Activated CD4-positive, alpha-beta T cell treated with anti-CD3 and anti-CD28 coated beads for 36 hours (primary cell): ENCODE measurements at regions of chr2 and their contacts with region 1.

Region 1: DNA sequence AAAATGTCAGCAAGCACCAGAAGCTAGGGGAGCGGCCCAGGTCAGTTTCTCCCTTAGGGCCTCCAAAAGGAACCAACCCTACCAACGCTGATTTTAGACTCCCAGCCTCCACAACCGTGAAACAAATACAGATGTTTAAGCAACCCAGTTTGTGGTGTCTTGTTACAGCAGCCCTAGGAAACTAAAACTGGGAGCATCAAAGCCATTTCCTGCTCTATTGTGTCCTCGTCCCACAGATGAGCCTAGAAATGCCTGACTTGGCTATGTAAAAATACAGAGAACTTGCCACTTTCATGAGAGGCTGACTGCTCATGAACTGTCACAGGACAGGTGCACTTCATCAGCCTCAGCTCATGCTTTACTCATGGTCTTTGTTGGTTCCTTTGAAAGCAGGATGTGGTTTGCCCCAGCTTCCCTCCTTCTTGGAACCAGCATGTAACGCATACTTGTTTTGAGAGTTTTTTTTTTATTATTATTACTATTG is 97.6 kb upstream of the SLC39A10 start:
- DNase-seq: peak; percentile 88
- ATAC-seq: peak; percentile 72
- H3K4me3 Mint-ChIP-seq: peak overlapping the region; percentile 33
- H3K27ac Mint-ChIP-seq: peak overlapping the region; percentile 97
- H3K4me1 Mint-ChIP-seq: peaks cover 67% of the 10 kb centered on the region
- H3K27me3 Mint-ChIP-seq: no peaks in the 10 kb centered on the region

Region 2: GRCh38 chr2:195486987-195487644 is 72.4 kb before region 1 on chr2:
- CTCF ChIA-PET with region 1: no interaction called
- POLR2A ChIA-PET with region 1: interaction called, 4 read pairs
- intact Hi-C with region 1: loop called (anchors 2 kb)
- DNase-seq: peak; percentile 11
- ATAC-seq: peak; percentile 82
- H3K4me3 Mint-ChIP-seq: no peak overlapping the region
- H3K27ac Mint-ChIP-seq: no peak overlapping the region
- H3K4me1 Mint-ChIP-seq: peaks cover 20% of the 10 kb centered on the region
- H3K27me3 Mint-ChIP-seq: no peaks in the 10 kb centered on the region

Region 3: DNA sequence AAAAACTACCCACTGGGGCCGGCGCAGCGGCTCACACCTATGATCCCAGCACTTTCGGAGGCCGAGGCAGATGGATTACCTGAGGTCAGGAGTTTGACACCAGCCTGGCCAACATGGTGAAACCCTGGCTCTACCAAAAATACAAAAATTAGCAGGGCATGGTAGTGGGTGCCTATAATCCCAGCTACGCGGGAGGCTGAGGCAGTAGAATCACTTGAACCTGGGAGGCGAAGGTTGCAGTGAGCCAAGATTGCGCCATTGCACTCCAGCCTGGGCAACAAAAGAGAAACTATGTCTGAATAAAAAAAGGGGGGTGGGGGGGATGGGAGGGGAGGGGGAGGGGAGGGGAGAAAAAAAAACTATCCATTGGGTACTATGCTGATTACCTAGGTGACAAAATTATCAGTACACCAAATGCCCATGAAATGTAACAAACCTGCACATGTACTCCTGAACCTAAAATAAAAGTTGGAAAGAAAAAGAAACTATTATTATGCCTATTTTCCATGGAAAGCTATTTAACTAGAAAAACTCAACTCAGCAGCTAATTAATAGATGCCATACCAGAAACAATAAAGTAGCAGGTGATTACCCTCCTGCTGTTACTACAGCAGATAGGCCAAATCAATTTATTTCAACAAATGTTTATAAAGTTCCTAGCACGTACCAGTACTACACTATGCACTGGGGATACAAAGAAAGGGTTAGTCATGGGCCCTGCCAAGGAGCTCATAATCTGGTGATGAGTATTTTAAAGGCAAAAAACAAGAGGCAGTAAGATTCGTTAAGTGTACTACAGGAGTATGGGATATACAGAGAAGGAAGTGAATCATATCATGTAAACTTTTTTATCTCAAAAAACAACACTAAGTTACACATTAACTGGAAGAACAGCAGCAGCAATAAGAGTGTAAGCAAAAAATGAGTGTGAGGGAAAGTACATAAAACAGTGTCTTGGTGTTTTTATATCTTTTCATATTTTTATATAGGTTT is 15.3 kb before region 1 on chr2:
- CTCF ChIA-PET with region 1: interaction called, 15 read pairs
- POLR2A ChIA-PET with region 1: interaction called, 11 read pairs
- intact Hi-C with region 1: loop called (anchors 1 kb)
- DNase-seq: peak; percentile 63
- ATAC-seq: peak; percentile 99
- H3K4me3 Mint-ChIP-seq: peak overlapping the region; percentile 15
- H3K27ac Mint-ChIP-seq: peak overlapping the region; percentile 96
- H3K4me1 Mint-ChIP-seq: peaks cover 66% of the 10 kb centered on the region
- H3K27me3 Mint-ChIP-seq: no peaks in the 10 kb centered on the region

Region 4: DNA sequence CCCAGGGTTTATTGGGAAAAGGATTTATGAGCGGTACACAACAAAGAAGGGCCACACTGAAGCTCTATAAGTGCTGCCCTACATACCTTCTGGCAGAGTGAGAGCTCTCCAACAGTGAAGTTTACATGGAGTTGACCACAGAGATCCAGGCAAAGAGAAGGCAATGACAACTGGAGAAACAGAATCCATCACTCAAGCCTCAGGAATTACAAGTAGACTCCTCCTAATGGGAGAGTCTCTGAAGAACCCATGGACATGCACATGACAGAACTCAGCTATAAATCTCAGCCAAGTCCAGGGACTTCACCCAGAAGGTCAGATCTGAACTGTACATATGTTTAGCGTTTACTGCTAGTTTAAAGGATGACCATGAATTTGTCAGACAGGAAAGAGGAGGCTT is 344.5 kb after region 1 on chr2:
- CTCF ChIA-PET with region 1: no interaction called
- POLR2A ChIA-PET with region 1: no interaction called
- intact Hi-C with region 1: no loop called
- DNase-seq: no peak
- ATAC-seq: no peak
- H3K4me3 Mint-ChIP-seq: no peak overlapping the region
- H3K27ac Mint-ChIP-seq: no peak overlapping the region
- H3K4me1 Mint-ChIP-seq: no peaks in the 10 kb centered on the region
- H3K27me3 Mint-ChIP-seq: no peaks in the 10 kb centered on the region

Region 5: GRCh38 chr2:196149948-196150347 is 590.5 kb after region 1 on chr2:
- CTCF ChIA-PET with region 1: no interaction called
- POLR2A ChIA-PET with region 1: no interaction called
- intact Hi-C with region 1: loop called in 1 of 2 experiments (anchors 5 kb)
- DNase-seq: no peak
- ATAC-seq: peak; percentile 27
- H3K4me3 Mint-ChIP-seq: peak overlapping the region; percentile 11
- H3K27ac Mint-ChIP-seq: peak overlapping the region; percentile 92
- H3K4me1 Mint-ChIP-seq: peaks cover 90% of the 10 kb centered on the region
- H3K27me3 Mint-ChIP-seq: no peaks in the 10 kb centered on the region

Region 6: GRCh38 chr2:196171248-196171871 is 611.9 kb after region 1 on chr2 and contains the start of gene STK17B:
- CTCF ChIA-PET with region 1: no interaction called
- POLR2A ChIA-PET with region 1: no interaction called
- intact Hi-C with region 1: loop called (anchors 5 to 10 kb)
- DNase-seq: peak; percentile 99
- ATAC-seq: peak; percentile 76
- H3K4me3 Mint-ChIP-seq: peak within 1 kb of the TSS; percentile 92
- H3K27ac Mint-ChIP-seq: peak within 1 kb of the TSS; percentile 98
- H3K4me1 Mint-ChIP-seq: peaks cover 38% of the 10 kb centered on the region
- H3K27me3 Mint-ChIP-seq: no peaks in the 10 kb centered on the region
- total RNA-seq, gene STK17B: 159 to 178 TPM

Region 7: GRCh38 chr2:196200557-196200956 is 641.1 kb after region 1 on chr2:
- CTCF ChIA-PET with region 1: no interaction called
- POLR2A ChIA-PET with region 1: no interaction called
- intact Hi-C with region 1: no loop called
- DNase-seq: peak; percentile 65
- ATAC-seq: peak; percentile 92
- H3K4me3 Mint-ChIP-seq: peak overlapping the region; percentile 47
- H3K27ac Mint-ChIP-seq: peak overlapping the region; percentile 90
- H3K4me1 Mint-ChIP-seq: peaks cover 49% of the 10 kb centered on the region
- H3K27me3 Mint-ChIP-seq: no peaks in the 10 kb centered on the region